ENCODE measurements at regions of chrX and their contacts with region 1.

Region 1: DNA sequence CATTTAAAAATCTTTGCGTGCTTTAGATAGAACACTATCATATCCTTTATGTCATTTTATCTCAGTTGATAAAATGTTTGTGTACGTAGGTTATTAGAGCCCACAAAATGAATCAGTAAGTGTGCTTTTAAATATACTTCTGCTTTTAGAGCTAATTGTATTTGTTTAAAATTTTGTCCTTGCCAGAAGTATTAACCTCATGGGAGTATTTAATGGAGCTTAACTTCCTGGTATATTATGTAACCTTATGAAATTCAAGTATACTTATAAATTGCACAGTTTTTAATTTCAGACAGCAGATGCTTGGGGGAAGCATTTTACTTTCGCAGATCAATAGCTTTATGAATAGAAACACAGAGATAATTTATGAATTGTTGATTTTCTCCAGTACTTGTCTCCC is 90.2 kb downstream of the DIPK2B start:
- DNase-seq: no peak
- H3K4me3 ChIP-seq: no peak overlapping the region
- H3K27ac ChIP-seq: no peak overlapping the region
- H3K4me1 ChIP-seq: no peaks in the 10 kb centered on the region
- H3K27me3 ChIP-seq: no peaks in the 10 kb centered on the region
- CTCF ChIP-seq: no peak
- EP300 ChIP-seq: no peak
- POLR2A ChIP-seq: no peak

Region 2: GRCh38 chrX:44494357-44494756 is 616.1 kb before region 1 on chrX:
- in situ Hi-C with region 1: no loop called
- intact Hi-C with region 1: no loop called
- DNase-seq: no peak
- H3K4me3 ChIP-seq: no peak overlapping the region
- H3K27ac ChIP-seq: no peak overlapping the region
- H3K4me1 ChIP-seq: no peaks in the 10 kb centered on the region
- H3K27me3 ChIP-seq: no peaks in the 10 kb centered on the region
- CTCF ChIP-seq: no peak
- EP300 ChIP-seq: no peak
- POLR2A ChIP-seq: no peak

Region 3: DNA sequence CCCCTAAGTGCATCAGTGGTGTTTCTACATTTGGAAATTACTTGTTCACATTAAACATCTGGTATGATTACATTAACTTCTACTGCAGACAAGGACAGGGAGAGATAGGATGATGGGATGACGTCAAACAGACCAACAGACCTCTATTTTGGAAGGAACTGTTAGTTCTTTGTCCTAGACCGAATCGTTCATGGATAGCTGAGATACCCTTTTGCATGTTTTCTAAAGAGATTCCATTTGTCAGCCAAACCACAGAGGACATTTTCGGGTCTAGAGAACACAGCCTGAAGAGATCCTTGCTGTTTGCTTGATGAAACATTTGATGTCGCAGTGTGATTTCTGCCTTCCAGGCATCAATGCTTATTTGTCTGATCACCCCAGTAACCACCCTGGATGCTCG is 1490.8 kb after region 1 on chrX:
- in situ Hi-C with region 1: no loop called
- intact Hi-C with region 1: loop called (anchors 10 kb)
- DNase-seq: no peak
- H3K4me3 ChIP-seq: no peak overlapping the region
- H3K27ac ChIP-seq: no peak overlapping the region
- H3K4me1 ChIP-seq: no peaks in the 10 kb centered on the region
- H3K27me3 ChIP-seq: no peaks in the 10 kb centered on the region
- CTCF ChIP-seq: no peak
- EP300 ChIP-seq: no peak
- POLR2A ChIP-seq: no peak